ENCODE measurements at regions of chr5 and their contacts with region 1.

Region 1: GRCh38 chr5:142699184-142699720 is 13.4 kb upstream of the FGF1 start:
- DNase-seq: peak; percentile 89 to 95
- H3K4me3 ChIP-seq: no peak overlapping the region
- H3K27ac ChIP-seq: peak overlapping the region; percentile 70 to 75
- H3K4me1 ChIP-seq: peaks cover 6 to 47% (median 29%) of the 10 kb centered on the region in 4 donors
- H3K27me3 ChIP-seq: no peaks in the 10 kb centered on the region
- CTCF ChIP-seq: peak; percentile 95 to 99

Region 2: GRCh38 chr5:142151436-142152383 is 547.5 kb before region 1 on chr5:
- intact Hi-C with region 1: loop called (anchors 5 kb)
- DNase-seq: peak in 1 of 2 donors; percentile 57
- H3K4me3 ChIP-seq: no peak overlapping the region
- H3K27ac ChIP-seq: no peak overlapping the region
- H3K4me1 ChIP-seq: peaks cover 0 to 5% (median 2%) of the 10 kb centered on the region in 4 donors
- H3K27me3 ChIP-seq: no peaks in the 10 kb centered on the region
- CTCF ChIP-seq: peak; percentile 80 to 86

Region 3: GRCh38 chr5:142611154-142611553 is 88.1 kb before region 1 on chr5:
- intact Hi-C with region 1: loop called (anchors 5 kb)
- DNase-seq: peak; percentile 78 to 88
- H3K4me3 ChIP-seq: no peak overlapping the region
- H3K27ac ChIP-seq: peak overlapping the region; percentile 10 to 37
- H3K4me1 ChIP-seq: peaks cover 0 to 29% (median 4%) of the 10 kb centered on the region in 4 donors
- H3K27me3 ChIP-seq: no peaks in the 10 kb centered on the region
- CTCF ChIP-seq: peak; percentile 93 to 97

Region 4: DNA sequence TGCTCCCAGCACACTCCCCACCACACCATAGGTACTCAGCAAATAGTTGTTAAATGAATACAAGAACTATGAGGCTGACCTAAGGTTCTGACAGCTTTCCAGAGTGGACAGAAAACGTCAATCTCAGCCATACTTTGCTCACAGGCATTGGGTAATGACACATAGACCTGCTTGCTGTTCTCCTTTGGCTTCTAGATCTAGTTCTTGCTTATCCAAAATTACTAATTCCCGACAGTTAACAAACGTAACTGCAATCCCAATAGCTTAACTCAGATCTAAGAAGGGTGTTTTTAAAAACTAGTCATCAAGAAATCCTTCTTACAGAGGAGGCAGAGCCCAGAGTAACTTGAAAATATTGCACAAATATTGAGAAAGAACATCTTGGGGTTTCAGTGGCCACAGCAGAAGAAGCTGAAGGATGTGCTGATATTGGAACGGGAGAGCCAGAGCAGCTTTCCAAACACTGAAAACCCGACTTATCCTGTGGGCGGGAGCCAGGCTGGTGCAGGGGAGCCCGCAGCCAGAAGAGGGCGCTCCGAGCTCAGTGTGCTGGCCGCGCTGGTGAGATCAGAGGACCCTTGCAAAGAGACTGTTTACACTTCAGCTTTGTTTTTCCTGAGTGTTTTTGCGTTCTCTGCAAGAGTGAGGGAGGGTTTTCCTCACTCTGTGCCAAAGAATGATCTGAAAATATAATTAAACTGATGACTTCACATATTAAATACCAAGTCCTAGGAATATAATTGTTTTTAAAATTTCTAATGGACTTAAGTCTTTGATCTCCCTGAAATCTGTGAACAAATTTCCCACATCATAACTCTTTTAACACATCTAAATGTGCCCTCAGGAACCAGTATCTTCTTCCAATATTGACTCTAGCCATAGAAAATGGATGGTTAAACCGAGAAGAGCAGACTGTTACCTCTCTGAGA is 43.6 kb before region 1 on chr5:
- intact Hi-C with region 1: loop called (anchors 2 kb)
- DNase-seq: peak; percentile 92
- H3K4me3 ChIP-seq: peak overlapping the region in 1 of 2 donors; percentile 6
- H3K27ac ChIP-seq: peak overlapping the region; percentile 57 to 69
- H3K4me1 ChIP-seq: peaks cover 0 to 32% (median 17%) of the 10 kb centered on the region in 4 donors
- H3K27me3 ChIP-seq: no peaks in the 10 kb centered on the region
- CTCF ChIP-seq: peak; percentile 97 to 99

Measured in tibial artery (tissue), 4 donors.